ENCODE measurements at regions of chr12 and their contacts with region 1.

Region 1: GRCh38 chr12:39105111-39105510 is 199.7 kb upstream of the CPNE8 start:
- DNase-seq: no peak
- ATAC-seq: no peak

Region 2: GRCh38 chr12:38138225-38139221 is 966.6 kb before region 1 on chr12:
- intact Hi-C with region 1: loop called (anchors 5 kb)
- DNase-seq: peak; percentile 87
- ATAC-seq: peak; percentile 80

Measured in sciatic nerve (tissue), 2 donors.